Sciatic nerve (tissue), 2 donors: ENCODE measurements at regions of chr2 and their contacts with region 1.

Region 1: GRCh38 chr2:169540146-169540545 is 30.6 kb downstream of the KLHL41 start:
- DNase-seq: no peak
- ATAC-seq: no peak

Region 2: GRCh38 chr2:169136885-169137534 is 403.1 kb before region 1 on chr2:
- intact Hi-C with region 1: loop called (anchors 5 kb)
- DNase-seq: no peak
- ATAC-seq: no peak

Region 3: GRCh38 chr2:169573160-169573973 is 33.2 kb after region 1 on chr2 and contains the start of gene FASTKD1:
- intact Hi-C with region 1: no loop called
- DNase-seq: peak; percentile 90
- ATAC-seq: peak; percentile 99
- total RNA-seq, gene FASTKD1: 17.3 TPM

Region 4: DNA sequence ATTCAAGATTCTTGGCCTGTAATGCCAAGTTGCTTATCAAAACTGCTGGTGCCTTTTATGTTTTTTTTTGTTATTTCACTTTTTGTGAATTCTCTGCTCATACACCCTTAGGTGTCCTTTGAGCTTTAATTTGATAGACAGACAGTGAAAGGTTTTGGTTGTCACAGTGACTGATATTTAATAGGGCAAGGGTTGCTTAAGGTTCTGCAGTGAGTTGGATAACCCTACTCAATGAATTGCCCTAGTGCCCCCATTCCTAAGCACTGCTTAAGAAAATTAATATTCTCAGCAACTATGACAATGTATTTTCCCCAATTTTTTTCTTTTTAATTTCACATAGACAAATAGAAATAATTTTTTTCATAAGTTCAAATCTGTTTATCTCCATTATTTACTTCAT is 59.4 kb after region 1 on chr2:
- intact Hi-C with region 1: no loop called
- DNase-seq: no peak
- ATAC-seq: no peak

Region 5: DNA sequence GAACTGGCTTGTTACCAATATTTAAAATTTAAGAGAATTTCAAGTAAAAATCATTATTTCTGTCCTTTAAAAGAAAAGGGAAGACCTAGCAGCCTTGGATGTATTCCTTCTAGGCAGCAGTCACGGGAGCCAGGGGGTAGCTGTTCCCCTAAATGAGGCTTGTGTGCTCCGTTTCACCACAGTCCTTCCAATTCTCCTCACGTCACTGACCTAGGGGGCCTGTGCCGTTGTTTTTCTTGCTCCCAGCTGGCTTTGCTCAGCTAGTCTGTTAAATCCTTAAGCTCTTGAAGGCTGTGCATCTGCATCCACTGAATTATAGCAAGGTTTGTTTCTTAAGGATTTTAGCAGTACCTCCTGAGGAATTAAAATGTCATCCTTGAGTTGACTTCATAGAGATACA is 203.4 kb after region 1 on chr2:
- intact Hi-C with region 1: no loop called
- DNase-seq: no peak
- ATAC-seq: no peak